B cell (primary cell): ENCODE measurements at regions of chr9 and their contacts with region 1.

Region 1: GRCh38 chr9:5593904-5594303 is 35.0 kb upstream of the RIC1 start:
- DNase-seq: peak; percentile 84
- ATAC-seq: peak; percentile 57
- H3K4me3 ChIP-seq: no peak overlapping the region
- H3K4me3 Mint-ChIP-seq: peak overlapping the region; percentile 50
- H3K27ac ChIP-seq: peak overlapping the region in 1 of 2 donors; percentile 40
- H3K27ac Mint-ChIP-seq: peak overlapping the region; percentile 69
- H3K4me1 ChIP-seq: peaks cover 41 to 44% of the 10 kb centered on the region in 2 donors
- H3K4me1 Mint-ChIP-seq: peaks cover 68% of the 10 kb centered on the region
- H3K27me3 ChIP-seq: no peaks in the 10 kb centered on the region
- H3K27me3 Mint-ChIP-seq: no peaks in the 10 kb centered on the region
- CTCF ChIP-seq: no peak

Region 2: GRCh38 chr9:5073701-5074100 is 520.2 kb before region 1 on chr9:
- CTCF ChIA-PET with region 1: no interaction called
- POLR2A ChIA-PET with region 1: no interaction called
- intact Hi-C with region 1: loop called (anchors 10 kb)
- DNase-seq: no peak
- ATAC-seq: no peak
- H3K4me3 ChIP-seq: no peak overlapping the region
- H3K4me3 Mint-ChIP-seq: no peak overlapping the region
- H3K27ac ChIP-seq: no peak overlapping the region
- H3K27ac Mint-ChIP-seq: no peak overlapping the region
- H3K4me1 ChIP-seq: no peaks in the 10 kb centered on the region
- H3K4me1 Mint-ChIP-seq: no peaks in the 10 kb centered on the region
- H3K27me3 ChIP-seq: no peaks in the 10 kb centered on the region
- H3K27me3 Mint-ChIP-seq: no peaks in the 10 kb centered on the region
- CTCF ChIP-seq: peak; percentile 12

Region 3: GRCh38 chr9:5231212-5231611 is 362.7 kb before region 1 on chr9 and contains the start of gene INSL4:
- CTCF ChIA-PET with region 1: no interaction called
- POLR2A ChIA-PET with region 1: no interaction called
- intact Hi-C with region 1: no loop called
- DNase-seq: no peak
- ATAC-seq: no peak
- H3K4me3 ChIP-seq: no peak within 1 kb of the TSS
- H3K4me3 Mint-ChIP-seq: no peak within 1 kb of the TSS
- H3K27ac ChIP-seq: no peak within 1 kb of the TSS
- H3K27ac Mint-ChIP-seq: no peak within 1 kb of the TSS
- H3K4me1 ChIP-seq: no peaks in the 10 kb centered on the region
- H3K4me1 Mint-ChIP-seq: no peaks in the 10 kb centered on the region
- H3K27me3 ChIP-seq: peaks cover 0 to 3% (median 0%) of the 10 kb centered on the region in 4 experiments
- H3K27me3 Mint-ChIP-seq: peaks cover 31% of the 10 kb centered on the region
- CTCF ChIP-seq: no peak
- total RNA-seq, gene INSL4: not detected in 2 replicates

Region 4: DNA sequence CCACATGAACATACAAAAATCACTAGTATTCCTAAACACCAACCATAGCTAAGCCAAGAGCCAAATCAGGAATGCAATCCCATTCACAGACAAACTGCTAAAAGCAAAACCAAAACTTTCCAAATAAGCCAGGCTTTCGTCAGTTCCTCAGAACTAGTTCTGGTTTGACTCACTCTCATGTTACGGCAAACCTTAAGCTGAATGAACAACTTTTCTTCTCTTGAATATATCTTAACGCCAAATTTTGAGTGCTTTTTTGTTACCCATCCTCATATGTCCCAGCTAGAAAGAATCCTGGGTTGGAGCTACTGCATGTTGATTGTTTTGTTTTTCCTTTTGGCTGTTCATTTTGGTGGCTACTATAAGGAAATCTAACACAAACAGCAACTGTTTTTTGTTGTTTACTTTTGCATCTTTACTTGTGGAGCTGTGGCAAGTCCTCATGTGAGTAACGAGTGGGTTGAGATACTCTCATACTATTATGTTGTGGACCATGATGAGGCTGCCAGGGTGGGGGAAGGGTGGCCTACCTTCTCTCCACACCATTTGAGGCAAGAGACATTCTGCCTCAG is 83.5 kb before region 1 on chr9 and contains the start of gene PDCD1LG2:
- CTCF ChIA-PET with region 1: interaction called, 4 read pairs
- POLR2A ChIA-PET with region 1: interaction called, 3 read pairs
- intact Hi-C with region 1: loop called (anchors 5 kb)
- DNase-seq: peak; percentile 58
- ATAC-seq: peak; percentile 45
- H3K4me3 ChIP-seq: peak within 1 kb of the TSS in 2 of 5 experiments; percentile 18 to 35
- H3K4me3 Mint-ChIP-seq: peak within 1 kb of the TSS; percentile 86
- H3K27ac ChIP-seq: peak within 1 kb of the TSS; percentile 23 to 54
- H3K27ac Mint-ChIP-seq: peak within 1 kb of the TSS; percentile 89
- H3K4me1 ChIP-seq: peaks cover 20 to 33% of the 10 kb centered on the region in 2 donors
- H3K4me1 Mint-ChIP-seq: peaks cover 43% of the 10 kb centered on the region
- H3K27me3 ChIP-seq: no peaks in the 10 kb centered on the region
- H3K27me3 Mint-ChIP-seq: no peaks in the 10 kb centered on the region
- CTCF ChIP-seq: no peak
- total RNA-seq, gene PDCD1LG2: 0.49 and 0.67 TPM in 2 replicates

Region 5: DNA sequence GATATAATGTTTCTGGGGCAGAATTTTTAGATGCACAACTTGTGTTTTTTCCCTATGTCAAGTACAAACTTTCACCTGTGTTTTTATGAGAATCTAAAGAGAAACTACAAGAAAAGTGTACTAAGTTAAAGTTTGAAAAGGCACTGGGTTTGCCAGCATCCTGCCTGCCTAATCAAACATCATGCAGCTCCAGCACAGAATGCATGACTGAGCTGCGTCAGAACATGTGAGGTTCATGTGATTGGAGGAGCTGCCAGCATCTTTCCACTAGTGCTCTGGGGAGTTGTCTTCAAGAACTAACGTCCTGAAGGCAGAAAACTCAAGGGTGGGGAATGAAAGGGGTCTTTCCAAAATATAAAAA is 11.1 kb before region 1 on chr9:
- CTCF ChIA-PET with region 1: interaction called, 53 read pairs
- POLR2A ChIA-PET with region 1: no interaction called
- intact Hi-C with region 1: loop called (anchors 1 kb)
- DNase-seq: peak; percentile 85
- ATAC-seq: peak; percentile 76
- H3K4me3 ChIP-seq: no peak overlapping the region
- H3K4me3 Mint-ChIP-seq: peak overlapping the region; percentile 67
- H3K27ac ChIP-seq: peak overlapping the region; percentile 53 to 75
- H3K27ac Mint-ChIP-seq: peak overlapping the region; percentile 92
- H3K4me1 ChIP-seq: peaks cover 25% of the 10 kb centered on the region in 2 donors
- H3K4me1 Mint-ChIP-seq: peaks cover 60% of the 10 kb centered on the region
- H3K27me3 ChIP-seq: no peaks in the 10 kb centered on the region
- H3K27me3 Mint-ChIP-seq: no peaks in the 10 kb centered on the region
- CTCF ChIP-seq: no peak

Region 6: DNA sequence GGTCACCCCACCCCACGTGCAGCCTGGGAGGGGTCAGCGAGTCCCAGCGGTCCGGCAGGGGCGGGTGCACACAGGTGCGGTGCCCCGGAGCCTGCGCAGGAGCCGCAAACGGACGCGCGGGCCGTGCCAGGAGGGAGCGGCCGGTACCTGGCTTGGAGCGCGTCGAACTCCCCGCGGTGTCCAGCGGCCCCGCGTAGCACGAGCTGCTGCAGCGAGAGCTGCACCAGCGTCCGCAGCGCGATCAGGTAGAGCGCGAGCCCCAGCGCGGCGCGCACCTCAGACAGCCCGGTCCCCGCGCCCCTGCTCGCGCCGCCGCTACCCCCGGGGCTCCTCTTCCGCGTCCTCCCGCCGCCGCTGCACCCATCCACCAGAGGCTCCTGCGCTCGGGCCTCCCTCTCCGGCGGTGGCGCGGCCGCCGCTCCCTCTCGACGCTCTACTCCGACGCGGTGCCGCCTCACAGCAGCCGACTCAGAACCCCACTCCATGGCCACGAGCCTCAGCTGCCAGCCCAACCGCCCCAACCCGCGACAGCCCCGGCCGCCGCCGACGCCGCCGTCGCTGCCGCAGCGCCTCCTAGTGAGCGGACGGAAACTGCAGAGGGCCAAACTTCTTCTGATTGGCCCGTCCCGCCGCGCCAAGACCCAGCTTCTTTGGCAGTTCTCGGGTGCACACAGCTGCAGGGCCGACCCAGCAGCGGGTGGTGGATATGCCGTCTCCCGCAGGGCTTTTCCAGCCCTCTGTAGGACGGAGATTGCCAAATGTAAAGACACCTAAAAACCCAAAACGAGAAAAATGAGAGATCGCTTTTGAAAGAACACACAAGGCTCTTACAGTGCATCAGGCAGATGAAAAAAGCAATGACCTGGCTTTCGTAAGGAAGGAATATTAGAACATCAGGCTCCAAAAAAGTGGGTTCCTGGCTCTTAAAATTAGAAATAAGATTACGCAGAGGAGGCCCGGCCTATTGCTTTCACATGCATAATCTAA is 238.9 kb after region 1 on chr9 and contains the start of gene ERMP1:
- CTCF ChIA-PET with region 1: no interaction called
- POLR2A ChIA-PET with region 1: no interaction called
- intact Hi-C with region 1: loop called (anchors 5 kb)
- DNase-seq: peak; percentile 93
- ATAC-seq: peak; percentile 89
- H3K4me3 ChIP-seq: peak within 1 kb of the TSS; percentile 63 to 83 (median 75)
- H3K4me3 Mint-ChIP-seq: peak within 1 kb of the TSS; percentile 95
- H3K27ac ChIP-seq: peak within 1 kb of the TSS in 1 of 2 donors; percentile 50
- H3K27ac Mint-ChIP-seq: peak within 1 kb of the TSS; percentile 93
- H3K4me1 ChIP-seq: peaks cover 19 to 25% of the 10 kb centered on the region in 2 donors
- H3K4me1 Mint-ChIP-seq: peaks cover 37% of the 10 kb centered on the region
- H3K27me3 ChIP-seq: no peaks in the 10 kb centered on the region
- H3K27me3 Mint-ChIP-seq: no peaks in the 10 kb centered on the region
- CTCF ChIP-seq: peak; percentile 96
- total RNA-seq, gene ERMP1: 10.6 and 12.8 TPM in 2 replicates